ENCODE measurements at regions of chr7 and their contacts with region 1.

Region 1: DNA sequence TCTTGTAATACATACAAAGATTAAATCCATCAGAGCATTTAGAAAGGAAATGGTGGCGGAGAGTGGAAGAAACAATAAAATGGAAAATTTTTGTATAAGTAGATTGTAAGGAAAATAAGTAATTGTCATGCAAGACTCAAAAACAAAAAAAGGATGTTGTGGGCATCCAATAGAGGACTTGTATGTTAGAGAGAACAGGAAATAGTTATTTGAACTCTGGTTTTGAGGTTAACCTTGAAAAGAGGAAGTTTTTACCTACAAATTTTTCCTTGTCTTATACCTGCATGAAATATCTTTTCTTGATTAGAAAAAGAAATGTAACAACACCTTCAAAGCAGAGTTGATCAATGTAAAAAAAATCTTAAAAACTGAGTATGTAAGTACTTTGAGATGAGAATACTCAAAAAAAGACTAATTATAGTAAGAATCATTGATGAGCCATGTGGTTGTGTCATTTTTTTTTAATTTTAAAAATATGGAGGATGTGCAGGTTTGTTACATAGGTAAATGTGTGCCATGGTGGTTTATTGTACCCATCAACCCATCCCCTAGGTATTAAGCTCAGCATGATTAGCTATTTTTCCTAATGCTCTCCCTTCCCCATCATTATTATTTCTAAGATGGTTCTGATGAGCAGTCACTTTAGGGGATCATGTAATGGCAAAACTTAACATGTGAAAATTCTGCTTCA is 11.9 kb downstream of the TMEM106B start:
- DNase-seq: peak in 4 of 5 donors; percentile 44 to 57 (median 50)
- H3K4me3 ChIP-seq: no peak overlapping the region
- H3K4me3 Mint-ChIP-seq: peak overlapping the region; percentile 26 to 85 (median 68)
- H3K27ac ChIP-seq: peak overlapping the region; percentile 30
- H3K27ac Mint-ChIP-seq: peak overlapping the region; percentile 49 to 93 (median 79)
- H3K4me1 ChIP-seq: peaks cover 44% of the 10 kb centered on the region
- H3K4me1 Mint-ChIP-seq: peaks cover 33 to 67% (median 53%) of the 10 kb centered on the region in 4 donors
- H3K27me3 ChIP-seq: no peaks in the 10 kb centered on the region
- H3K27me3 Mint-ChIP-seq: no peaks in the 10 kb centered on the region

Region 2: DNA sequence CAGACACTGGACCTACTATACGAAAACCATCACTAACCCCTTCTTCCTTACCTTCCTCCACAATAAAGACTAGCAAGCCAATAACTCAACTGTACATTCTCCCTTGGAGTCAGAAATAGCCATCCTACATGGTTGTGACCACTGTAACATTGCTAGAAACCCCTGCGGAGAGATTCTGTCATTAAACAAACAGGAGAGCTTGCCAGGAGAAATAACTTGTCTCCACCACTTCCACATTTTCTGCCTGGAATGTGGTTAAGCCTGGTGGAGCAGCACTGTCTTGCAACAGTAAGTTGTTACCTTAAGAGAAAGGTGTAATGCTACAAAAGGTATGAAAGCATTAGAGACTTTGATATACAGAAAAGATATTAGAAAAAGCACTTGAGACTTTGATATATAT is 436.8 kb before region 1 on chr7:
- CTCF ChIA-PET with region 1: no interaction called
- POLR2A ChIA-PET with region 1: no interaction called
- intact Hi-C with region 1: no loop called
- DNase-seq: no peak
- H3K4me3 ChIP-seq: no peak overlapping the region
- H3K4me3 Mint-ChIP-seq: no peak overlapping the region
- H3K27ac ChIP-seq: no peak overlapping the region
- H3K27ac Mint-ChIP-seq: no peak overlapping the region
- H3K4me1 ChIP-seq: no peaks in the 10 kb centered on the region
- H3K4me1 Mint-ChIP-seq: no peaks in the 10 kb centered on the region
- H3K27me3 ChIP-seq: no peaks in the 10 kb centered on the region
- H3K27me3 Mint-ChIP-seq: no peaks in the 10 kb centered on the region

Region 3: GRCh38 chr7:12062062-12062461 is 161.0 kb before region 1 on chr7:
- CTCF ChIA-PET with region 1: no interaction called
- POLR2A ChIA-PET with region 1: no interaction called
- intact Hi-C with region 1: no loop called
- DNase-seq: no peak
- H3K4me3 ChIP-seq: no peak overlapping the region
- H3K4me3 Mint-ChIP-seq: no peak overlapping the region
- H3K27ac ChIP-seq: no peak overlapping the region
- H3K27ac Mint-ChIP-seq: no peak overlapping the region
- H3K4me1 ChIP-seq: no peaks in the 10 kb centered on the region
- H3K4me1 Mint-ChIP-seq: peaks cover 0 to 2% (median under 1%) of the 10 kb centered on the region in 4 donors
- H3K27me3 ChIP-seq: no peaks in the 10 kb centered on the region
- H3K27me3 Mint-ChIP-seq: peaks cover 0 to 3% of the 10 kb centered on the region in 2 donors

Region 4: DNA sequence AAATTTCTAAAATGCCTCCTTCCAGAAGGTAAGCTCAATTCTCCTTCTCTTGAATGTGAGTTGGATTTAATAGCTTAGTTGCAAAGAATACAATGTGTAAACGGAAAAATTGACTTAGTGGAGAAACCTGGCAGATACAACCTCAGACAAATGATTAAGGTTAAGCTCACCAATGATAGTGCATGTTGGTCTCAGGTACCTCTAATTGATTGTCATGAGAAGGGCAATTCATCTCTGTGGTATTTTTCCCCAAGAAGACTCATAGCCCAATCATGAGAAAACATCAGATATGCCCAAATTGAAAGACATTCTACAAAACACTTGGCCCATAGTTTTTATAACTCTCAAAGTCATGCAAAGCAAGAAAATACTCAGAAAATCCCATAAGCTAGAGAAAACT is 48.1 kb before region 1 on chr7:
- CTCF ChIA-PET with region 1: interaction called, 3 read pairs
- POLR2A ChIA-PET with region 1: no interaction called
- intact Hi-C with region 1: loop called (anchors 1 kb)
- DNase-seq: no peak
- H3K4me3 ChIP-seq: no peak overlapping the region
- H3K4me3 Mint-ChIP-seq: no peak overlapping the region
- H3K27ac ChIP-seq: no peak overlapping the region
- H3K27ac Mint-ChIP-seq: no peak overlapping the region
- H3K4me1 ChIP-seq: peaks cover 12% of the 10 kb centered on the region
- H3K4me1 Mint-ChIP-seq: peaks cover 16 to 23% (median 18%) of the 10 kb centered on the region in 4 donors
- H3K27me3 ChIP-seq: no peaks in the 10 kb centered on the region
- H3K27me3 Mint-ChIP-seq: no peaks in the 10 kb centered on the region

Region 5: GRCh38 chr7:12244129-12244528 is 21.1 kb after region 1 on chr7:
- CTCF ChIA-PET with region 1: no interaction called
- POLR2A ChIA-PET with region 1: no interaction called
- intact Hi-C with region 1: loop called (anchors 2 kb)
- DNase-seq: no peak
- H3K4me3 ChIP-seq: no peak overlapping the region
- H3K4me3 Mint-ChIP-seq: no peak overlapping the region
- H3K27ac ChIP-seq: no peak overlapping the region
- H3K27ac Mint-ChIP-seq: no peak overlapping the region
- H3K4me1 ChIP-seq: peaks cover 6% of the 10 kb centered on the region
- H3K4me1 Mint-ChIP-seq: peaks cover 10 to 12% (median 11%) of the 10 kb centered on the region in 4 donors
- H3K27me3 ChIP-seq: no peaks in the 10 kb centered on the region
- H3K27me3 Mint-ChIP-seq: no peaks in the 10 kb centered on the region

Region 6: DNA sequence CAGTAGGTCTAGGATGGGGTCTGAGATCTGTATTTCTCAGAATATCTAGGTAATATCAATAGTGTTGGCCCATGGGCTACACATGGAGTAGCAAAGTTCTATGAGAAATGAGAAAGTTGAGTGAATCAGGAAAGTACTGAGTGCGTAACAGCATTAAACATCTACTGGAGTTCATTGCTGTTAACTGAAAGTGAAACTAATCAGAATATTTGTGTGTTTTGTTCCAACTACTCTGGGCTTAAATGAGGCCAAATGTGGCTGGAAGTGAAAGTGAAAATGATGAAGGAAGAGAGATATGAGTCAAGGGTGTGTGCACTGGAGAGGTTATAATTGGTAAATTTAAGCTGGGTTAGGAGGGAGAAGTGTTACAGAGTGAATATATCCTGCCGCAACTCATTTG is 34.5 kb after region 1 on chr7:
- CTCF ChIA-PET with region 1: no interaction called
- POLR2A ChIA-PET with region 1: interaction called, 5 read pairs
- intact Hi-C with region 1: loop called (anchors 1 kb)
- DNase-seq: peak; percentile 70 to 85 (median 78)
- H3K4me3 ChIP-seq: peak overlapping the region; percentile 7 to 50
- H3K4me3 Mint-ChIP-seq: no peak overlapping the region
- H3K27ac ChIP-seq: peak overlapping the region; percentile 62
- H3K27ac Mint-ChIP-seq: no peak overlapping the region
- H3K4me1 ChIP-seq: peaks cover 38% of the 10 kb centered on the region
- H3K4me1 Mint-ChIP-seq: peaks cover 4 to 8% (median 5%) of the 10 kb centered on the region in 4 donors
- H3K27me3 ChIP-seq: no peaks in the 10 kb centered on the region
- H3K27me3 Mint-ChIP-seq: no peaks in the 10 kb centered on the region

Measured in CD4-positive, alpha-beta memory T cell (primary cell).